Activated CD4-positive, alpha-beta memory T cell treated with anti-CD3 and anti-CD28 coated beads, Interleukin-2, amount 10 ng/mL, durations not matched to agents 7 days and 5 days (primary cell): ENCODE measurements at regions of chr13 and their contacts with region 1.

Region 1: GRCh38 chr13:44484562-44485138 is 91.5 kb downstream of the TSC22D1 start:
- DNase-seq: no peak
- H3K4me3 Mint-ChIP-seq: peak overlapping the region; percentile 24
- H3K27ac Mint-ChIP-seq: peak overlapping the region; percentile 7
- H3K4me1 Mint-ChIP-seq: peaks cover 16% of the 10 kb centered on the region
- H3K27me3 Mint-ChIP-seq: peaks cover 2% of the 10 kb centered on the region

Region 2: GRCh38 chr13:43994999-43995859 is 489.4 kb before region 1 on chr13:
- CTCF ChIA-PET with region 1: no interaction called
- POLR2A ChIA-PET with region 1: no interaction called
- DNase-seq: no peak
- H3K4me3 Mint-ChIP-seq: no peak overlapping the region
- H3K27ac Mint-ChIP-seq: no peak overlapping the region
- H3K4me1 Mint-ChIP-seq: no peaks in the 10 kb centered on the region
- H3K27me3 Mint-ChIP-seq: peaks cover 4% of the 10 kb centered on the region

Region 3: GRCh38 chr13:44917589-44918325 is 433.1 kb after region 1 on chr13:
- CTCF ChIA-PET with region 1: interaction called, 16 read pairs
- POLR2A ChIA-PET with region 1: no interaction called
- DNase-seq: peak; percentile 97
- H3K4me3 Mint-ChIP-seq: no peak overlapping the region
- H3K27ac Mint-ChIP-seq: no peak overlapping the region
- H3K4me1 Mint-ChIP-seq: no peaks in the 10 kb centered on the region
- H3K27me3 Mint-ChIP-seq: no peaks in the 10 kb centered on the region

Region 4: GRCh38 chr13:44969551-44970484 is 485.2 kb after region 1 on chr13:
- CTCF ChIA-PET with region 1: interaction called, 11 read pairs
- POLR2A ChIA-PET with region 1: no interaction called
- DNase-seq: no peak
- H3K4me3 Mint-ChIP-seq: no peak overlapping the region
- H3K27ac Mint-ChIP-seq: no peak overlapping the region
- H3K4me1 Mint-ChIP-seq: no peaks in the 10 kb centered on the region
- H3K27me3 Mint-ChIP-seq: no peaks in the 10 kb centered on the region